ENCODE measurements at regions of chr12 and their contacts with region 1.

Region 1: DNA sequence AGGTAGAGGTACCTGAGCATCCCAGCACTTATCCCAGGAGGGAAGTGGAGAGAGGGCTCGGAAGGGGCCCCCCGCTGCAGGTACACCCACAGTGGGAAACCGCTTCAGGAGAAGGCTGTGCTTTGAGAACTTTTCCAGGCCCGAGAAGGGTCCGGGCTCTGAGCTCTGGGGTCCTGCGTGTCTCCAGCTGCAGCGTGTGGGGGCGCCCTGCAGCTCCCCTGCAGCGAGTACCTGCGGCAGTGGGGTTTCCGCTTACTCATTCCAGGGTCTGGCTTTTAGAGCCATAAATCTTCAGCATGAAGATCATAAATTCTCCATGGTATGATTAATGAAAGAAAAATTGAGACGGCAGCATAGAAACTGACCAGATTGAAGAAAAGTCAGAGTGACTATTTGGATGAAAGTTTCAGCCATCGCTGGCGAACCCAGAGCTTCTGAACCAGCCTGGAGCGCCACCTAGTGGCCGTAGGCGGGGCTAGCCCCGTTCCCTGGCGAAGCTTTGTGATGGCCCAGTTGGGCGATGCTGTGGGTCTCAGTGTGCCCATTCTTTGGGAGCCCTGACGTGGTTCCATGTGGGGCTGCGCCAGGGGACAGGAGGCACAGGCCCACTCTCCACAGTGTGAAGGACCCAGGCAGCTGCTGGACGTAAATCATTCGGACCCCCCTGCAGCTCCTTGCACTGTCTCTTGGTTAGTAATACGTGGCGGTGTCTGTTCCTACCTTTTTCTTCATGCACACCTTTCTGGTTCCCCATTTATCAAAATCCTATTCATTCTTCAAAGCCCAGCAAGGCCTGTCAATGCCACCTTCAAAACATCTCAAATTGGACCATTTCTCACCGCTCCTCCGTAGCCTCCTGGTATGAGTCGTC is 198.2 kb downstream of the TSPAN9 start:
- DNase-seq: peak; percentile 91
- H3K4me3 ChIP-seq: no peak overlapping the region; a peak in 1 of 4 replicates
- H3K27ac ChIP-seq: no peak overlapping the region
- H3K4me1 ChIP-seq: peaks cover 0 to 2% of the 10 kb centered on the region in 2 experiments; a peak in 1 of 4 replicates
- H3K27me3 ChIP-seq: no peaks in the 10 kb centered on the region
- CTCF ChIP-seq: peak; percentile 97
- EP300 ChIP-seq: no peak
- RAD21 ChIP-seq: peak; percentile 98

Region 2: DNA sequence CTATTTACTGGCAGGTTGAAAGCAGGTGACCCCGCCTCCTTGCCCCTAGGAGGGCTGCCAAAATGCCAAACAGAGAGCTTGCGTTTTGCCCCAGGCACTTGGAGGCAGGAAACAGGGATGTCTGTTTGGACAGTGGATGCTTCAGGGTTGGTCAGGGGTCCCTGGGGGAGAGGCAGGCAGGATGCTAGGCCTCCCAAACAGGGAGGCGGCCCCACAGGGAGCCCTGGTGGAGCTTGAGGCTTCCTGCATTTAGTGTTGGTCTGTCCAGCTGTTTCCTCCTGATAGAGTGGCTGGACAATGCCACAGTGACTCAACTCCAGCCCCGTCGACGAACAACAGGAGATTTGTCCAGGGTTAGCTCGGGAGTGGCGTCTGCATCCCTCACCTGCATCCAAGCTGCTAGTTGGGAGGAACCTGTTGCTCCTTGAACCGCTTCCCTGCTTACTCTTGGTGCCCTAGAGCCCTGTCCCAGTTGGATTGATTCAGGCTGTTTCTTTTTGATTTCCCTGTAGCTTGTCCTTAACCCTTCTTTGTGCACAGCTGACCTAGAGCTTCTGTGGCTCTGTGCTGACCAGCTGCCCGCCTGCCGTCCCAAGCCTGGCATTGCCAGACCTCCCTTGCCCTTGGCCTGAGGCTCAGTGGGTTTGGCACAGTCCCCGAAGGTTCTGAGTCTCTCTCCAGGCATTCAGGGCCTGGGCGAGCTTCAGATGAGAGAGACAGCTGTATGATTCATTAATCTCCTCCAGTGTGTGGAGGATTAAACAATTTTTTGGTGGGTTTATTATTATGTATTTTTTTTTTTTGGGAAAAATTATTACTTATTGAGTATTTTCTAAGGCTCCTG is 152.3 kb before region 1 on chr12:
- CTCF ChIA-PET with region 1: interaction called, 368 read pairs
- POLR2A ChIA-PET with region 1: no interaction called
- DNase-seq: peak; percentile 74
- H3K4me3 ChIP-seq: no peak overlapping the region
- H3K27ac ChIP-seq: peak overlapping the region; percentile 80 to 84
- H3K4me1 ChIP-seq: peaks cover 18 to 26% of the 10 kb centered on the region in 2 experiments
- H3K27me3 ChIP-seq: no peaks in the 10 kb centered on the region
- CTCF ChIP-seq: no peak
- EP300 ChIP-seq: peak in 1 of 2 experiments; percentile 7; a peak in 2 of 4 replicates
- RAD21 ChIP-seq: no peak

Region 3: GRCh38 chr12:3150931-3151835 is 124.2 kb before region 1 on chr12:
- CTCF ChIA-PET with region 1: interaction called, 40 read pairs
- POLR2A ChIA-PET with region 1: no interaction called
- DNase-seq: peak; percentile 22
- H3K4me3 ChIP-seq: no peak overlapping the region
- H3K27ac ChIP-seq: no peak overlapping the region
- H3K4me1 ChIP-seq: peaks cover 7 to 32% of the 10 kb centered on the region in 2 experiments; a peak in 3 of 4 replicates
- H3K27me3 ChIP-seq: no peaks in the 10 kb centered on the region
- CTCF ChIP-seq: no peak
- EP300 ChIP-seq: no peak
- RAD21 ChIP-seq: no peak

Region 4: DNA sequence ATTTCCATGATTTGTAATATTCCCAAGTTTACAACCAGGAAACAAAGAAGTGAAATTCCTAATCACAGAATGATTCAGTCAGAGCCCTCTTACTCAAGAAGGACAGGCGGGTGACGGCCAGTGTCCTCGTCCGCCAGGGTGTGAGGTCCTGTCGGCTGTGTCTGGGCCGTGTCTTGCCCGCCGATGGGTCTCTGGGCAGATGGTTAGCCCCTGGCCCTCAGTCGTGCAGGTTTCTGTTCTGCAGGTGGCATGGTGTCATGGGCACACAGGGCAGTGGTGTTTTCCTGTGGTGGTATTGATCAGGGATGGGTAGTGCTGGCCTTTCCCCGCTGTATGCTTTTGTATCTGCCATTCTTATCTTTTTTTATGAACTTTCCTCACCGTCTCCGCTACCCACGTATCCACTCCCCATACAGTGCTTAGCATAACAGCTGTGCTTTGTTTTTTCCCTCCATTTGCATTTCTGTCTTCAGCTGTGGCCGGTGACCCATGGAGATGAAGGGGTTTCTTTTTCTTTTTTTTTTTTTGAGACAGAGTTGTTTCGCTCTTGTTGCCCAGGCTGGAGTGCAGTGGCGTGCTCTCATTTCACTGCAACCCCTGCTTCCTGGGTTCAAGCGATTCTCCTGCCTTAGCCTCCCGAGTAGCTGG is 97.5 kb before region 1 on chr12:
- CTCF ChIA-PET with region 1: interaction called, 10 read pairs
- POLR2A ChIA-PET with region 1: no interaction called
- DNase-seq: no peak
- H3K4me3 ChIP-seq: no peak overlapping the region
- H3K27ac ChIP-seq: no peak overlapping the region
- H3K4me1 ChIP-seq: peaks cover 0 to 4% of the 10 kb centered on the region in 2 experiments; a peak in 1 of 4 replicates
- H3K27me3 ChIP-seq: no peaks in the 10 kb centered on the region
- CTCF ChIP-seq: no peak
- EP300 ChIP-seq: no peak
- RAD21 ChIP-seq: no peak

Region 5: GRCh38 chr12:3202734-3203446 is 72.5 kb before region 1 on chr12:
- CTCF ChIA-PET with region 1: interaction called, 70 read pairs
- POLR2A ChIA-PET with region 1: no interaction called
- DNase-seq: peak; percentile 83
- H3K4me3 ChIP-seq: no peak overlapping the region; a peak in 1 of 4 replicates
- H3K27ac ChIP-seq: no peak overlapping the region
- H3K4me1 ChIP-seq: peaks cover 6 to 55% of the 10 kb centered on the region in 2 experiments; a peak in 3 of 4 replicates
- H3K27me3 ChIP-seq: no peaks in the 10 kb centered on the region
- CTCF ChIP-seq: peak; percentile 98
- EP300 ChIP-seq: no peak
- RAD21 ChIP-seq: peak; percentile 58

Region 6: GRCh38 chr12:3236345-3237187 is 38.8 kb before region 1 on chr12:
- CTCF ChIA-PET with region 1: interaction called, 24 read pairs
- POLR2A ChIA-PET with region 1: no interaction called
- DNase-seq: peak; percentile 51
- H3K4me3 ChIP-seq: no peak overlapping the region
- H3K27ac ChIP-seq: no peak overlapping the region
- H3K4me1 ChIP-seq: peaks cover 5 to 6% of the 10 kb centered on the region in 2 experiments; a peak in 2 of 4 replicates
- H3K27me3 ChIP-seq: no peaks in the 10 kb centered on the region
- CTCF ChIP-seq: no peak
- EP300 ChIP-seq: no peak
- RAD21 ChIP-seq: no peak

Region 7: DNA sequence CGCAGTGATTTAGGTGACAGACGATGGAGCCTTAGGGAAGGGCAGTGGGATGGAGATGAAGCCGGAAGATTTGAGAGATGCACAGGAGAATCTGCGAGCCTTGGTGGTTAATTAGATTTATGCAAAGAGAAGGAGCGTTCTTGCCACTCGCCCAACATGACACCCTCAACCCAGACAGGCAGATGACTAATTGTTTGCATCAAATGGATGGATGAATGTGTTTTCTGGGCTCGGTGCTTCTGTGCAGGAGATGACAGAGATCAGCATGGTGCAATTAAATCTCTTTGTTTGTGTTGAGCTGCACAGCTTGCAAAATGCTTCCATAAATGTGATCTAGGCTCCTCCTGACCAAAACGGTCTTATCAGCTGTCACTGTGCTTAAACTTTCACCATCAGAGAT is 13.3 kb after region 1 on chr12:
- CTCF ChIA-PET with region 1: interaction called, 188 read pairs
- POLR2A ChIA-PET with region 1: no interaction called
- DNase-seq: no peak
- H3K4me3 ChIP-seq: no peak overlapping the region
- H3K27ac ChIP-seq: no peak overlapping the region
- H3K4me1 ChIP-seq: peaks cover 0 to 12% of the 10 kb centered on the region in 2 experiments; a peak in 1 of 4 replicates
- H3K27me3 ChIP-seq: no peaks in the 10 kb centered on the region
- CTCF ChIP-seq: no peak
- EP300 ChIP-seq: no peak
- RAD21 ChIP-seq: no peak

Region 8: GRCh38 chr12:3333583-3333982 is 58.2 kb after region 1 on chr12:
- CTCF ChIA-PET with region 1: no interaction called
- POLR2A ChIA-PET with region 1: no interaction called
- DNase-seq: peak; percentile 42
- H3K4me3 ChIP-seq: no peak overlapping the region
- H3K27ac ChIP-seq: no peak overlapping the region
- H3K4me1 ChIP-seq: peaks cover 0 to 7% of the 10 kb centered on the region in 2 experiments; a peak in 1 of 4 replicates
- H3K27me3 ChIP-seq: peaks cover 8% of the 10 kb centered on the region; the same call in 1 of the 2 replicates
- CTCF ChIP-seq: no peak
- EP300 ChIP-seq: no peak
- RAD21 ChIP-seq: peak; percentile 26; the same call in 1 of the 2 replicates

Region 9: DNA sequence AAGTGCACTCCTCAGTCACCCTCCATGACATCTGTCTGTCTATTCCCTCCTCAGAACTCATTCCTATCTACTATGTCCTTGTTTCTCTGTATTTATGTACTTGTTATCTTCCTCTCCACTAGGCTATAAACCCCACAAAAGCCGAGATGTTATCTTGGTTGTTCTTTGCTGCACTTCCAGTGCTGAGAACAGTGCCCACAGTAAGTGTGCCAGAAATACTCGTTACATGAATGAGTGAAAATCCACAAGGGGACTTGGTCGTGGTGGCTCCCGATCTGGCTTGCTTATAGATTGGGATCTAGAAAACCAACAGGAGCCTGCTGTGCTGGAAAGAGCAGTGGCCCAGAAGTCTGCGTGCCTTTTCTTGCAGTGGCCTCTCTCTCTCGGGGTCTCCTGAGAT is 103.7 kb after region 1 on chr12:
- CTCF ChIA-PET with region 1: no interaction called
- POLR2A ChIA-PET with region 1: no interaction called
- DNase-seq: no peak
- H3K4me3 ChIP-seq: no peak overlapping the region
- H3K27ac ChIP-seq: no peak overlapping the region
- H3K4me1 ChIP-seq: no peaks in the 10 kb centered on the region; a peak in 1 of 4 replicates
- H3K27me3 ChIP-seq: 0 out of 2 replicates have a peak, but pooled peaks cover 7% of the 10 kb centered on the region
- CTCF ChIP-seq: no peak
- EP300 ChIP-seq: no peak
- RAD21 ChIP-seq: no peak

Region 10: GRCh38 chr12:3389986-3390385 is 114.6 kb after region 1 on chr12:
- CTCF ChIA-PET with region 1: no interaction called
- POLR2A ChIA-PET with region 1: no interaction called
- DNase-seq: peak; percentile 36
- H3K4me3 ChIP-seq: no peak overlapping the region
- H3K27ac ChIP-seq: no peak overlapping the region
- H3K4me1 ChIP-seq: no peaks in the 10 kb centered on the region; a peak in 1 of 4 replicates
- H3K27me3 ChIP-seq: no peaks in the 10 kb centered on the region
- CTCF ChIP-seq: no peak
- EP300 ChIP-seq: no peak
- RAD21 ChIP-seq: no peak

Region 11: DNA sequence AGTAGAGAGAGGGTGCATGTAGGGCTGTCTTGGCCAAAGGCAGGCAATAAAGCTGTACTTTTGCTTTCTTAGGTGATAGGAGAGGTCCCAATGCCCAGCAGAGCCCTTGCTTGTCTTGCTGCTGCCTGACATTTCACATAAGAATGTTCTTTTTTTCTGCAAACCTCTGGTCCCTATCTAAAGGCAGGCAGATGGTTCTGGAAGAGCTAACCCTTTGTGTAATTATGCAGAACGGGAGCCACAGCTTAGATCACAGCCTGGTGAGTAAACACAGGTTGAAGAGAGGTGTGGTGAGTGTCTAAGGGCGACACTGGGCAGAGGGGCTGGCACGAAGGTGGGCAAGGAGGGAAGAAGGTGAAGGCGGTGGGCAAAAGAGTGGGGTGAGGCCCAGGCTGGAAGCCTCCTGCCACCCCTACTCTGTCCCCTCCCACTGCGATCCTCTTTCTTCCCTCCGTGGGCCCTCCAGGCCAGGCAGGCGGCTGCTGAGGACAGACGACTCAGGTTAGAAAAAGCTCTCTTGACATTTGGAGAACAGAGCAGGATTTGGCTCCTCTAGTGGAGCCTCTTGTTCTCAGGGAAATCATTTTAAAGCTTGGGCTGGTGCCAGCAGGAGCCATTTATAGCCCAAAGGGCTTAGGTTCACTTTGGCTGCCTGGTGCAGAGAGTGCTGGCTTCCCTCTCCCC is 258.4 kb after region 1 on chr12:
- CTCF ChIA-PET with region 1: no interaction called
- POLR2A ChIA-PET with region 1: no interaction called
- DNase-seq: peak; percentile 59
- H3K4me3 ChIP-seq: no peak overlapping the region
- H3K27ac ChIP-seq: no peak overlapping the region
- H3K4me1 ChIP-seq: peaks cover 0 to 5% of the 10 kb centered on the region in 2 experiments; a peak in 1 of 4 replicates
- H3K27me3 ChIP-seq: no peaks in the 10 kb centered on the region
- CTCF ChIP-seq: no peak
- EP300 ChIP-seq: no peak
- RAD21 ChIP-seq: no peak